Caco-2 (cell line): ENCODE measurements at regions of chr18 and their contacts with region 1.

Region 1: DNA sequence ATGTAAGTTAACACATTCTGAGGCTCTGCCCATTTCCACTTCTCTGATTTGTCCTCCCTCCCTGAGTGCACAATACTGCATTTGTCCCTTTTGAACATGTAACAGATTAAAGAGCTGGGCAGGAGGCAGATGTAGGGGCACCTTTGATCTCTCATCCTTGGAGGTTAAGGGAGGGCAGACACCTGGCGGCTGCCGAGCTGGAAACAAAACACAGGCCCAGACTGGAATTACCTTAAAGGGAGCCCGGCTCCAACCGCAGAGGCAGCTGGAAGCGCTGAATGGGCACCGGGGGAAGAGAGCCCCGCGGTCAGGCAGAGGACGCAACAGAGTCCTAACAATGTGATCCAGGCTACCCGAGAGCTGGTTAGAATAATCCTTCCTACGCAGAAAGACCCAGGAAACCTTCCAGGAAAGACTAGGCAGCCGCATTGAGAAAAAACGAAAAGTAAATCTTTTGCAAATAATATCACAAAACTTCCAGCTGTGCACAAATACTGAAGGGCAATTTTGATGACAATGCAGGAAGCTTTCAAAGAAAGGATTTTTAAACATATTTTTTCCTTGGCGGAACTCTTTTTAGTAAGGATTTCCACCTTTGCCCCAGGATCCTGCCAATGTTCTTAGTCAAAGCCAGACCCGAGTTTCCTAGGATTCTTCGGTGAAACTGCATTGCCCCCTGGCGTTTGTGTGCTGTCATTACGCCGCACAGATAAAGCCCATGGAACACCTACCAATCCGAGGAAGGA is 216.0 kb downstream of the TGIF1 start:
- DNase-seq: peak; percentile 90 to 91
- H3K4me3 ChIP-seq: peak overlapping the region; percentile 2; the same call in 1 of the 2 replicates
- H3K4me3 Mint-ChIP-seq: peak overlapping the region; percentile 73
- H3K27ac Mint-ChIP-seq: peak overlapping the region; percentile 82
- H3K4me1 ChIP-seq: peaks cover 26% of the 10 kb centered on the region
- H3K4me1 Mint-ChIP-seq: peaks cover 33% of the 10 kb centered on the region
- H3K27me3 ChIP-seq: no peaks in the 10 kb centered on the region
- H3K27me3 Mint-ChIP-seq: no peaks in the 10 kb centered on the region
- CTCF ChIP-seq: peak; percentile 82 to 90

Region 2: GRCh38 chr18:2932247-2933181 is 733.4 kb before region 1 on chr18:
- CTCF ChIA-PET with region 1: no interaction called
- POLR2A ChIA-PET with region 1: no interaction called
- intact Hi-C with region 1: loop called (anchors 5 kb)
- DNase-seq: peak in 1 of 2 experiments; percentile 68
- H3K4me3 ChIP-seq: no peak overlapping the region
- H3K4me3 Mint-ChIP-seq: no peak overlapping the region
- H3K27ac Mint-ChIP-seq: no peak overlapping the region
- H3K4me1 ChIP-seq: no peaks in the 10 kb centered on the region
- H3K4me1 Mint-ChIP-seq: peaks cover 6% of the 10 kb centered on the region
- H3K27me3 ChIP-seq: no peaks in the 10 kb centered on the region
- H3K27me3 Mint-ChIP-seq: no peaks in the 10 kb centered on the region
- CTCF ChIP-seq: peak; percentile 73 to 75

Region 3: DNA sequence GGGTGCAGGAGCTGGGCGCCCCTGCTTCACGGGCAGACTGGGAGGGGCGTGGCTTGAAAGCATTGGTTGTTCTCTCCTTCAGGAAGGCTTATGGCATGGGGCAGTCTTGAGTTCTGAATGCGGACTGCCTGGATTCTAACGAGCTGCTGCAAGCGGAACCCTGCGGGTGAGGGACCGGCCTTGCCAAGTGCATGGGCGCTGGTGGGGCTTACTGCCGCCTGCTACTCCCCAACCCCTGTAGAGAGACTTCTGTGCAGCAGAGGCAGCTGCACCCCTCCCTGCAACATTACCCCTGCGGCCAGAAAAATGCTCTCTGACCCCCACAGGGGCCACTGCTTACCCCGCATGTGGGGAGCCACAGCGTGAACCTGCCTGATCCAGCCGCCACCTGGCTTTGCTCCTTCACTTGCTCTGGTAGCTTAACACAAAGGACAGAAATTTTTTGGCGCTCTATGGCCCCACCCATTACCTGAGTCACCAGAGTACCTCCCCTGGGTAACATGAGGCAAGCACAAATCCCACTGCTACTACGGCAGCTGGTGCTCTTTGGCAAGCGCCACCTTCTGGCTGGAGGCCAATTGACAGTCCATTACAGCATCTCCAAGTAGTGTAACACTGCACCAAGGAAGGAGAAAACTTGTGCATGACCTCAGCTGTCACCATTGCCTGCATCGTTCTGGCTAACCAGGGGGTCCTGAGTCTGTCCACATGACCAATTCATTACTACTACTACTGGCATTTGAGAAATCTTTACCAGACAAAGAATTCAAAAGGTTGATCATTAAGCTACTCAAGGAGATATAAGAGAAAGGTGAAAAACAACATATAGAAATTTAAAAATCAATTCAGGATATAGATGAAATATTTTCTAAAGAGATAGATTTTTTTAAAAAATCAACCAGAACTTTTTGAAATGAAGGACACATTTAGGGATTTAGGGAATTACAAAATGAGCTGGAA is 368.6 kb before region 1 on chr18:
- CTCF ChIA-PET with region 1: interaction called, 18 read pairs
- POLR2A ChIA-PET with region 1: interaction called, 13 read pairs
- intact Hi-C with region 1: loop called (anchors 5 kb)
- DNase-seq: peak; percentile 94 to 95
- H3K4me3 ChIP-seq: peak overlapping the region; percentile 70
- H3K4me3 Mint-ChIP-seq: peak overlapping the region; percentile 93
- H3K27ac Mint-ChIP-seq: peak overlapping the region; percentile 89
- H3K4me1 ChIP-seq: no peaks in the 10 kb centered on the region
- H3K4me1 Mint-ChIP-seq: peaks cover 7% of the 10 kb centered on the region
- H3K27me3 ChIP-seq: no peaks in the 10 kb centered on the region
- H3K27me3 Mint-ChIP-seq: peaks cover 4% of the 10 kb centered on the region
- CTCF ChIP-seq: peak; percentile 87 to 94

Region 4: GRCh38 chr18:3454365-3455089 is 211.4 kb before region 1 on chr18:
- CTCF ChIA-PET with region 1: interaction called, 9 read pairs
- POLR2A ChIA-PET with region 1: interaction called, 9 read pairs
- intact Hi-C with region 1: loop called (anchors 1 kb)
- DNase-seq: peak; percentile 52 to 69
- H3K4me3 ChIP-seq: peak overlapping the region; percentile 15; the same call in 1 of the 2 replicates
- H3K4me3 Mint-ChIP-seq: peak overlapping the region; percentile 87
- H3K27ac Mint-ChIP-seq: peak overlapping the region; percentile 97
- H3K4me1 ChIP-seq: peaks cover 44% of the 10 kb centered on the region
- H3K4me1 Mint-ChIP-seq: peaks cover 39% of the 10 kb centered on the region
- H3K27me3 ChIP-seq: no peaks in the 10 kb centered on the region
- H3K27me3 Mint-ChIP-seq: no peaks in the 10 kb centered on the region
- CTCF ChIP-seq: peak; percentile 57 to 69

Region 5: DNA sequence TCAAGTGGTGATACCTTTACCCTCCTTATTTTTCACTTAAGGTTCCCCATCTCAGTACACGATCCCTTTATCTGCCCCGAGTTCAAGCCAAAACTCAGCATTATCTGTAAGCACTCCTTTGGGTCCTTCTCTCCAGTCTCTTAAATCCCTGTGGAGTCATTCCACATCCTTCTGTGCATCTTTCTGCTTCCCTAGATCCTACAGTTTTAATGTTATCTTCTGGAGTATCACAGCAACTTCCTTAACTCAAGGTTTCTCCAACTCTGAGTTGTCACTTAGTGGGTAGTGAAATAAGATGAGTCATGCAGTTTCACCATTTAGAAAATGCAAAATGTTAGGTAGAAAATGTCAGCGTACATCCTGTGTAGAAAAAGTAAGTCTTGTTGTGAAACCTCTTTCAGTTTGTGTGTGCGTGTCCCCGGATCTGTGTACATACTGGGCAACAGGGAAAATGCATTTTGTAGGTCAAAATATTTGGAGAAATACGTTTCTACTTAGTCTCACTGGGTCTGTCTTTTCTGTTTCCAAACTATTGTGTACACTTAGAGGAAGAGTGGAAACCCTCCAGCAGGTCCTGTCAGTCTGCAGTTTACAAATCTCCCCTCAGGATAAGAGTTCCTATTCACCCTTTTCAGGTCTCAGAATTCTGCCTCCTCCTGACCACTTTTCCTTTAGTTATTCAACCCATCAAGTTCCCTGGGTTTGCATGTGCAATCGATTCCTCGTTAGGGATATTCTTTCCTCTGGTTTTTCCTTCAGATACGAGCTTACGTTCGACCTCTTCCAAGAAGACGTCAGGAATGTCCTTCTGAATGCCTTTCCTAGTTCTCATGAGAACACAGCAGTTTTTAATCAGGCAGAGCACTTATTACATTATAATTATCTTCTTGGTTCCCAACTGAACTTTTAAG is 61.2 kb before region 1 on chr18:
- CTCF ChIA-PET with region 1: interaction called, 52 read pairs
- POLR2A ChIA-PET with region 1: interaction called, 82 read pairs
- intact Hi-C with region 1: loop called (anchors 1 kb)
- DNase-seq: peak in 1 of 2 experiments; percentile 53
- H3K4me3 ChIP-seq: peak overlapping the region; percentile 50
- H3K4me3 Mint-ChIP-seq: no peak overlapping the region
- H3K27ac Mint-ChIP-seq: no peak overlapping the region
- H3K4me1 ChIP-seq: peaks cover 35% of the 10 kb centered on the region
- H3K4me1 Mint-ChIP-seq: peaks cover 15% of the 10 kb centered on the region
- H3K27me3 ChIP-seq: no peaks in the 10 kb centered on the region
- H3K27me3 Mint-ChIP-seq: no peaks in the 10 kb centered on the region
- CTCF ChIP-seq: no peak

Region 6: DNA sequence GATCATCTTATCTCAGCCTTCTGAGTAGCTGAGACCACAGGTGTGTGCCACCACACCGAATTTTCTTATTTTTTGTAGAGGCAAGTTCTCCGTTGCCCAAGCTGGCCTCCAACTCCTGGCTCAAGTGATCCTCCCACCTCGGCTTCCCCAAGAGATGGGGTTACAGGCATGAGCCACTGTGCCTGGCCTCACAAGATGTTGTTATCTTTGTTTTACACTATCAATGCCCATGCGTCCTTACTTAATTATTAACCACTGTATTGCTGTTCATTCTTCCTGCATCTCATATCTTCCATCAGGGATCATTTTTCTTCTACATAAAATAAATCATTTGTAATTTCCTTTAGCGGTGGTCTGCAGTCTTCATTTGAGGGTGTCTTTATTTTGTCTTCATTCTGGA is 34.1 kb before region 1 on chr18:
- CTCF ChIA-PET with region 1: interaction called, 3 read pairs
- POLR2A ChIA-PET with region 1: no interaction called
- intact Hi-C with region 1: loop called (anchors 1 kb)
- DNase-seq: no peak
- H3K4me3 ChIP-seq: no peak overlapping the region
- H3K4me3 Mint-ChIP-seq: no peak overlapping the region
- H3K27ac Mint-ChIP-seq: no peak overlapping the region
- H3K4me1 ChIP-seq: peaks cover 29% of the 10 kb centered on the region
- H3K4me1 Mint-ChIP-seq: peaks cover 13% of the 10 kb centered on the region
- H3K27me3 ChIP-seq: no peaks in the 10 kb centered on the region
- H3K27me3 Mint-ChIP-seq: no peaks in the 10 kb centered on the region
- CTCF ChIP-seq: no peak

Region 7: GRCh38 chr18:3885209-3885792 is 219.3 kb after region 1 on chr18:
- CTCF ChIA-PET with region 1: no interaction called
- POLR2A ChIA-PET with region 1: no interaction called
- intact Hi-C with region 1: no loop called
- DNase-seq: peak in 1 of 2 experiments; percentile 25
- H3K4me3 ChIP-seq: no peak overlapping the region
- H3K4me3 Mint-ChIP-seq: no peak overlapping the region
- H3K27ac Mint-ChIP-seq: no peak overlapping the region
- H3K4me1 ChIP-seq: peaks cover 19% of the 10 kb centered on the region
- H3K4me1 Mint-ChIP-seq: peaks cover 20% of the 10 kb centered on the region
- H3K27me3 ChIP-seq: no peaks in the 10 kb centered on the region
- H3K27me3 Mint-ChIP-seq: no peaks in the 10 kb centered on the region
- CTCF ChIP-seq: peak; percentile 33 to 48